B cell (primary cell): ENCODE measurements at regions of chr17 and their contacts with region 1.

Region 1: GRCh38 chr17:44186307-44187130 is at the start of gene TMUB2:
- DNase-seq: peak; percentile 100
- ATAC-seq: peak; percentile 97
- H3K4me3 ChIP-seq: peak within 1 kb of the TSS; percentile 63 to 99 (median 90)
- H3K4me3 Mint-ChIP-seq: peak within 1 kb of the TSS; percentile 98
- H3K27ac ChIP-seq: peak within 1 kb of the TSS; percentile 93 to 97
- H3K27ac Mint-ChIP-seq: peak within 1 kb of the TSS; percentile 100
- H3K4me1 ChIP-seq: peaks cover 22 to 26% of the 10 kb centered on the region in 2 donors
- H3K4me1 Mint-ChIP-seq: peaks cover 40% of the 10 kb centered on the region
- H3K27me3 ChIP-seq: no peaks in the 10 kb centered on the region
- H3K27me3 Mint-ChIP-seq: no peaks in the 10 kb centered on the region
- CTCF ChIP-seq: no peak
- total RNA-seq, gene TMUB2: 50.9 and 52.3 TPM in 2 replicates

Region 2: GRCh38 chr17:44006598-44007345 is 179.7 kb before region 1 on chr17:
- CTCF ChIA-PET with region 1: no interaction called
- POLR2A ChIA-PET with region 1: no interaction called
- intact Hi-C with region 1: loop called (anchors 1 kb)
- DNase-seq: peak; percentile 96
- ATAC-seq: peak; percentile 91
- H3K4me3 ChIP-seq: peak overlapping the region; percentile 53 to 84 (median 77)
- H3K4me3 Mint-ChIP-seq: peak overlapping the region; percentile 95
- H3K27ac ChIP-seq: peak overlapping the region in 1 of 2 donors; percentile 33
- H3K27ac Mint-ChIP-seq: peak overlapping the region; percentile 68
- H3K4me1 ChIP-seq: peaks cover 37 to 42% of the 10 kb centered on the region in 2 donors
- H3K4me1 Mint-ChIP-seq: peaks cover 33% of the 10 kb centered on the region
- H3K27me3 ChIP-seq: peaks cover 0 to 28% (median 11%) of the 10 kb centered on the region in 4 experiments
- H3K27me3 Mint-ChIP-seq: peaks cover 13% of the 10 kb centered on the region
- CTCF ChIP-seq: peak; percentile 69

Region 3: DNA sequence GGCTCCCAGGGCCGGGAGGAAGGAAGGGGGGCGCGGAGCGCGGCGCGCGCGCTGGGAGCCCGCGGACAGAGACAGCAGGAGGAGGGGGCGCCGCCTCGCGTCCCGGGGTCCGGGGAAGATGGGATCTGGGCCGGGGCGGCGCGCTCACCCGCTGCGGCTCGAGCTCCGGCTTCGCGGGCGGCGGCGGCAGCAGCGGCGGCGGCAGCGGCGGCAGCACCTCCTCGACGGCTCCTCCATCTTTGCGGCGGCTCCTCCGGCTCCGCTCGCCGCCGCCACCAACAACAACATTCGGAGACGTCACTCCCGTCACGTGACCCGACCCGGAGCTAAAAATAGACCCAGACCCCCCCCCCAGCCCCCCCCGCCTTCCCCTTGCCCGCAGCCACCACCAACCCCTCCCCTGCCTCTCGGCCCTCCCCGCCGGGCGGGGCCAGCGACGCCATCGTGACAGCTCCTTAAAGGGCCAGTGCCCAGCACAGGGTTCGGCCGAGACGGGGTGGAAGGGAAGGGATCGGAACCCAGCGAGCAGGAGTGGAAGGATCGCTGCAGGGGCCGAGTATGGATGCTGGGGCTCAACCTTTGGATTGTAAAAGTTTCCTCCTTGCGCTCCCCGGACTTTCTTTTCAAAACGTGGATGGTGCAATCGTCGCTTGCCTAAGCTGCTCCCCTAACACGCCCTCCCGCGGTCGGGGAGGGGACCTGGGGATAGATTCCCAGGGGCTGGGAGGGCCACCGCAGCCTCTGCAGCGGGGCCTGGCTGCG is 63.0 kb before region 1 on chr17 and contains the start of gene HDAC5:
- CTCF ChIA-PET with region 1: interaction called, 13 read pairs
- POLR2A ChIA-PET with region 1: interaction called, 5 read pairs
- intact Hi-C with region 1: loop called (anchors 1 kb)
- DNase-seq: peak; percentile 95
- ATAC-seq: peak; percentile 97
- H3K4me3 ChIP-seq: peak within 1 kb of the TSS; percentile 71 to 98 (median 85)
- H3K4me3 Mint-ChIP-seq: peak within 1 kb of the TSS; percentile 95
- H3K27ac ChIP-seq: peak within 1 kb of the TSS; percentile 43 to 90
- H3K27ac Mint-ChIP-seq: peak within 1 kb of the TSS; percentile 99
- H3K4me1 ChIP-seq: peaks cover 18 to 26% of the 10 kb centered on the region in 2 donors
- H3K4me1 Mint-ChIP-seq: peaks cover 45% of the 10 kb centered on the region
- H3K27me3 ChIP-seq: no peaks in the 10 kb centered on the region
- H3K27me3 Mint-ChIP-seq: no peaks in the 10 kb centered on the region
- CTCF ChIP-seq: peak; percentile 76
- total RNA-seq, gene HDAC5: 104 and 113 TPM in 2 replicates

Region 4: DNA sequence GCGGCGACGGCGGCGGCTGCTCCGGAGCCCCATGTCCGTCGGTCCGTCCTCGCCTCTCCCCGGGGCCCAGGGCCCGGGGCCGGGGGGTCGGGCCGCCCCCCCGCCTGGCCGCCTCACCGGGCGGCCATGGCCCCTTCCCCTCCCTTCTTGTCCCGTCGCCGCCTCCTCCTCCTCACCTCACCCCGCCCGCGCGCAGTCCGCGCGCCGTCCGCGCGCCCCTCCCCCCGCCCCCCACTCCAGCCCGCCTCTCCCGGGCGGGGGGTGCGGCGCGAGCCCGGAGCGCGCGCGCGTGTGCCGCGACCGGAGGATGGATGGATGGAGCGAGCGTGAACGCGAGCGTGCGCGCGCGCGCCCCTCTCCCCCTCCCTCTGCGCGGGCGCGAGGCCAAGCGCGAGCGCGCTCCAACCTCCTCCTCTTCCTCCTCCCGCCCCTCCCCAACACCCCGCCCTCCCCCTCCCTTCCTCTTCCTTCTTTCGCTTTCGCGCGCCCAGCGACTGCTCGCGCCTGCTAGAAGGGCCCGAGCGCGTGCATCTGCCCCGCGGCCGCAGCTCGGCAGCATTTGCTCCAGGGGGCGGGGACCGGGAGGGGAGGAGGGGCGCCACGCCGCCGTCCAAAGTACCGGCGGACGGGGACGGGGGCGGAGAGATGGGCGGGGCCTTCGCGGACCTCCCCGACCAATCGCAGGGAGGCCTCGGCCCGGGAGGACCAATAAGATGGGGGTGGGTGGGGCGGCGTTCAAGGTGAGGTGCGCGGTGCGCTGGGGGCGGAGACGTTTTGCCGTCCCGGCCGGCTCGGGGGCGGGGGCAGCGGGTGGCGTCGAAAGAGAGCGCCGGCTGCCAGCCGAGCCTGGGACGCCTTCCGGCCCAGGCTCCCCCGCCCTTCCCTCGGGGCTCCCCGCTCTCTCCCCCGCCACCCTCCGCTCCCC is 13.3 kb after region 1 on chr17 and contains the start of gene ATXN7L3:
- CTCF ChIA-PET with region 1: interaction called, 13 read pairs
- POLR2A ChIA-PET with region 1: interaction called, 25 read pairs
- intact Hi-C with region 1: loop called (anchors 1 kb)
- DNase-seq: peak; percentile 100
- ATAC-seq: peak; percentile 81
- H3K4me3 ChIP-seq: peak within 1 kb of the TSS; percentile 66 to 83 (median 81)
- H3K4me3 Mint-ChIP-seq: peak within 1 kb of the TSS; percentile 88
- H3K27ac ChIP-seq: peak within 1 kb of the TSS; percentile 89 to 90
- H3K27ac Mint-ChIP-seq: peak within 1 kb of the TSS; percentile 95
- H3K4me1 ChIP-seq: peaks cover 30 to 43% of the 10 kb centered on the region in 2 donors
- H3K4me1 Mint-ChIP-seq: peaks cover 46% of the 10 kb centered on the region
- H3K27me3 ChIP-seq: no peaks in the 10 kb centered on the region
- H3K27me3 Mint-ChIP-seq: no peaks in the 10 kb centered on the region
- CTCF ChIP-seq: no peak
- total RNA-seq, gene ATXN7L3: 107 and 119 TPM in 2 replicates

Region 5: GRCh38 chr17:44350733-44351226 is 164.3 kb after region 1 on chr17:
- CTCF ChIA-PET with region 1: interaction called, 12 read pairs
- POLR2A ChIA-PET with region 1: interaction called, 4 read pairs
- intact Hi-C with region 1: no loop called
- DNase-seq: peak; percentile 83
- ATAC-seq: peak; percentile 41
- H3K4me3 ChIP-seq: no peak overlapping the region
- H3K4me3 Mint-ChIP-seq: peak overlapping the region; percentile 35
- H3K27ac ChIP-seq: no peak overlapping the region
- H3K27ac Mint-ChIP-seq: peak overlapping the region; percentile 58
- H3K4me1 ChIP-seq: peaks cover 40 to 46% of the 10 kb centered on the region in 2 donors
- H3K4me1 Mint-ChIP-seq: peaks cover 38% of the 10 kb centered on the region
- H3K27me3 ChIP-seq: no peaks in the 10 kb centered on the region
- H3K27me3 Mint-ChIP-seq: no peaks in the 10 kb centered on the region
- CTCF ChIP-seq: peak; percentile 85